BJ (cell line): ENCODE measurements at regions of chr11 and their contacts with region 1.

Region 1: DNA sequence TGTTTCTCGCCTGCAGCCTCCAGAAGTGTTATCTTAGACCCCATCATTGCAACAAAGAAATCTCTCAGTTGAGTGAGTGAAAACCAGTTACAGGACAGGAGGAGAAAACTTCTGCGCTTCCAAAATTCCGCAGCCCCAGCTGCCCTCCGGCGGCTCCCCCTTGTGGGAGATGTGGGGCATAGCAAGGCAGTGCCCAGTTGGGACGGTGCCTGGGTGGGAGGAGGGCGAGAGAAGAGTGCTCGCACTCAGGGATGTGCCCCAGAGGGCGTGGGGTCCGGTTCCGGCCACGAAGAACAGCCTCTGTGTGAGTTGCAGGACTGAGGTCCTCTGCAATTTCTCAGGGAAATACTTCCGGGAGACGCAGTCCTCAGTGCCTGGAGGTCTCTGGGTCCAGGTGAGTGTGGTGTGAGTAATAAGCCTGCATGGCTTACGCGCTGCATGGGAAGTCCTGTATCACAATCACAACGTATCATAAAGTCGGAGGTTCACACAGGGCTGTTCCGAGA is 87.0 kb upstream of the BLID start:
- DNase-seq: no peak
- H3K4me3 ChIP-seq: peak overlapping the region; percentile 51
- H3K27me3 ChIP-seq: no peaks in the 10 kb centered on the region
- CTCF ChIP-seq: peak; percentile 99

Region 2: GRCh38 chr11:121655537-121656327 is 547.3 kb before region 1 on chr11:
- CTCF ChIA-PET with region 1: interaction called, 24 read pairs
- POLR2A ChIA-PET with region 1: no interaction called
- DNase-seq: peak; percentile 91
- H3K4me3 ChIP-seq: peak overlapping the region; percentile 45
- H3K27me3 ChIP-seq: no peaks in the 10 kb centered on the region
- CTCF ChIP-seq: peak; percentile 97

Region 3: DNA sequence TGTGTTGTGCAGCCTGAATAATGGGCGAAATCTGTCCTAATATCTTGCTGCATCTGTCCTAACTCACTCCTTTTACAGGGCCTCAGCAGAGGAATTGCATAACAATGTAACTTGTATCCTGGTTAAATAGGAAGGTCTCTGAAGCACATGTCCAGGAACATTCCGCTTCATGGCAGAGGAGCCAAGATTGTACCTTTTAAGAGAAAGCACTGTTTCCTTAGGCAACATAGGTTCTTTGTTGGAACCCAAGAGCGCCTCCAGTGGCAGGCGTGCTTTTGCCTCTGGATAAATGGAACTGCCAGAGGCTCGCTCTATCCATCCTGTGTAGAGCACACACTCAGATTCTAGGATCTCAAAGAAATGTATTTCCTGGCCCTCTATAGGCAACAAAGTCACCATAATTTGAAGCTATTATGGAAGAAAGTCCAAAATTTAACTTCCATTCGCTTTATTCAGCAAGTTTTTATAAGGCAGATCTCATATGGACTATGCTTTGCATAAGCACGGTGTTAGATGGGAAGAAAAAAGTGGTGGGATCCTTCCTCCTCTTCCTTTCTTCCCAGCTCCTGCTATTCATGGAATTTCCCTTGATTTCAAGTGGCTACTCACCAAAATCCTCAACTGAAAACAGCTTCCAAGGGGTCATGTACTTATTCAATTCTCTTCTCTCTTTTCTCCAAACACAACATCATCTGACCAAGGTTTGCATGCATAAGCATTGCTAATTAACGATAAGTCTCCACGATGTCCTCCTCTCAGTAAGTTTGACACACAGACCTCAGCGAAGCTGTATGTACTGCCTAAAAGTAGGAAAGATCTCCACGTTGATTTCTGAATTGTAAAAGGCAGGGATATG is 87.3 kb before region 1 on chr11 and contains the start of gene BLID:
- CTCF ChIA-PET with region 1: interaction called, 16 read pairs
- POLR2A ChIA-PET with region 1: interaction called, 3 read pairs
- DNase-seq: no peak
- H3K4me3 ChIP-seq: no peak within 1 kb of the TSS
- H3K27me3 ChIP-seq: no peaks in the 10 kb centered on the region
- CTCF ChIP-seq: peak; percentile 64
- polyA plus RNA-seq, gene BLID: 0.16 and 0.37 TPM in 2 replicates

Region 4: DNA sequence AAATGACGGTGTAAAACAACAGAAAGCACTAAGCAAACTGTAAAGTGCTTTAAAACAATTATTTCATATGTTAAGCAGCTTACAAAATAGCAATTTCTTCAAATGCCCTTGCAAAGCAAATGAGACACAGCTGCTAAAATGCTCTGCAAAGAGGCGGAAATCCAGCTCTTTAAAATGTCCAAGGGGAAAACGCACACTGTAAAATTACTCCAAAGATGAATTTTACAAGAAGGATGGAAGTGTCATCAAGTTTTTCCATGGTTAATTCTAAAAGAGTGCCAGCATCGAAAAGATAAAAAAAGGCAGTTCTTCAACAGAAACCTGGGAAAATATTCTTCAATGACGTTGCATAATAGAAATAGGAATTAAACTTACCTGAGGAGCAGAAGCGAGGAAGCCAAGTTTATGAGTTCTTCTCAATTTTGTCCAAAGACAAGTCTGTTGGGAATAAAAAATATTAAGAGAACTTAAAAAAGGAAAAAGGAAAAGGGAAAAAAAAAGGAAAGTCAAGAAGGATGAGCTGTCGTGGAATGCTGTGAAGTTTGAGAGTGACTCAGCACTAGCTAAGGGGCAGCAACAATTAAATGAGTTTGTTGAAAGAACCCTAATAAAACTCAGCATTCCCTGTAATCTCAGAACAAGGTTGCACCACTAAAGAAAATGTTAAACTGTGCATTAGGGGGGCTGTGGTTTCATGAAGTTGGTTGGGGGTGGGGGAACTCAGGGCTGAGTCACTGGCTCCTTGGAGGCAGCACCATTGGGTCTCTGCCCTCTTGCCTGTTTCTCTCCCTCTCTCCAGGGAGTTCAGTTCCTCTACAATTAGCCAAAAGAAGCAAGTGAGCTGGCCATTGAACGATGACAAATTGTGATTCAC is 22.8 kb before region 1 on chr11:
- CTCF ChIA-PET with region 1: interaction called, 11 read pairs
- POLR2A ChIA-PET with region 1: no interaction called
- DNase-seq: peak; percentile 97
- H3K4me3 ChIP-seq: peak overlapping the region; percentile 59
- H3K27me3 ChIP-seq: no peaks in the 10 kb centered on the region
- CTCF ChIP-seq: no peak

Region 5: GRCh38 chr11:122215244-122215992 is 12.4 kb after region 1 on chr11:
- CTCF ChIA-PET with region 1: interaction called, 31 read pairs
- POLR2A ChIA-PET with region 1: no interaction called
- DNase-seq: peak; percentile 93
- H3K4me3 ChIP-seq: no peak overlapping the region
- H3K27me3 ChIP-seq: no peaks in the 10 kb centered on the region
- CTCF ChIP-seq: peak; percentile 96